Gastrocnemius medialis (tissue), 4 donors: ENCODE measurements at regions of chr6 and their contacts with region 1.

Region 1: GRCh38 chr6:12890171-12890790 is 173.7 kb downstream of the PHACTR1 start:
- DNase-seq: no peak
- ATAC-seq: no peak
- H3K4me3 ChIP-seq: no peak overlapping the region
- H3K27ac ChIP-seq: no peak overlapping the region
- H3K4me1 ChIP-seq: peaks cover 0 to 5% of the 10 kb centered on the region in 2 donors
- H3K27me3 ChIP-seq: no peaks in the 10 kb centered on the region
- CTCF ChIP-seq: peak in 2 of 5 experiments; percentile 18 to 34
- POLR2A ChIP-seq: no peak

Region 2: GRCh38 chr6:12472601-12473038 is 417.7 kb before region 1 on chr6:
- in situ Hi-C with region 1: no loop called
- intact Hi-C with region 1: no loop called
- DNase-seq: peak; percentile 24 to 72
- ATAC-seq: peak; percentile 66 to 74
- H3K4me3 ChIP-seq: no peak overlapping the region
- H3K27ac ChIP-seq: no peak overlapping the region
- H3K4me1 ChIP-seq: no peaks in the 10 kb centered on the region
- H3K27me3 ChIP-seq: no peaks in the 10 kb centered on the region
- CTCF ChIP-seq: no peak
- POLR2A ChIP-seq: no peak

Region 3: DNA sequence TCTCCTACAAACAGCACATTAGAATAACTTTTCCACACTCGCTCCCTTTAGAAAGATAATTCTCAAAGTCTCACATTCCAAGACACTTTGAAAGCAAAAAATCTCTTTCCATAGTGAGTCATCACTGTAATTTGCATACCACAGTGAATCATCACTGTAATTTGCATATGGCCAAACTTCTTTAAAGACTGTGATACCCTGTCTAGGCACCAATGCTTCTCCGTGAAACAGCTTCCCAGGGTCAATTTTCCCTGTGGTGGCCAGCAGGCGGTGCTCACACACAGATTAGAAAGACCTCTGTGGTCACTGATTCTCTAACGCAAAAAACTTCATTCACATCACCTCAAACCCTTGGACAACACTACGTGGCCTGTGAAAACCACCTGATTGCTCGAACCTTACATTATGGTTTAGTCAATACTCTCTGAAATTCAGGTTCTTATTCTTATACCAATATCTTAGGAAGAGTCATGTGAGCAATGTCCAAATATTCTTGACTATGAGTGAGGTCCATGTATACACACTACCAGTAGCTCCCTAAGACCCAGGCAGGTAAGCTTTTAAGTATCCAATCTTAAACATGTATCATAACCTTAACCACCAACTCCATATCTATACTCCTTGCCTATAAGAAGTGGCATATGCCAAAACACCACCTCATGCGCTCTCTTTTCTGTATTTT is 252.2 kb before region 1 on chr6:
- in situ Hi-C with region 1: loop called in 2 of 4 experiments (anchors 25 kb)
- intact Hi-C with region 1: no loop called
- DNase-seq: no peak
- ATAC-seq: no peak
- H3K4me3 ChIP-seq: no peak overlapping the region
- H3K27ac ChIP-seq: no peak overlapping the region
- H3K4me1 ChIP-seq: no peaks in the 10 kb centered on the region
- H3K27me3 ChIP-seq: peaks cover 0 to 3% (median 0%) of the 10 kb centered on the region in 3 donors
- CTCF ChIP-seq: peak in 3 of 5 experiments; percentile 1 to 35 (median 12)
- POLR2A ChIP-seq: no peak

Region 4: GRCh38 chr6:12923644-12924235 is 33.5 kb after region 1 on chr6:
- in situ Hi-C with region 1: no loop called
- intact Hi-C with region 1: no loop called
- DNase-seq: no peak
- ATAC-seq: no peak
- H3K4me3 ChIP-seq: no peak overlapping the region
- H3K27ac ChIP-seq: no peak overlapping the region
- H3K4me1 ChIP-seq: no peaks in the 10 kb centered on the region
- H3K27me3 ChIP-seq: no peaks in the 10 kb centered on the region
- CTCF ChIP-seq: no peak
- POLR2A ChIP-seq: no peak